ENCODE measurements at regions of chr19 and their contacts with region 1.

Region 1: GRCh38 chr19:16324384-16325160 is at the start of gene KLF2:
- DNase-seq: peak; percentile 91 to 98 (median 95)
- ATAC-seq: peak; percentile 58 to 67
- H3K4me3 Mint-ChIP-seq: peak within 1 kb of the TSS; percentile 56 to 100 (median 82)
- H3K27ac Mint-ChIP-seq: peak within 1 kb of the TSS; percentile 74 to 100 (median 98)
- H3K4me1 Mint-ChIP-seq: peaks cover 23 to 64% (median 56%) of the 10 kb centered on the region in 4 donors
- H3K27me3 Mint-ChIP-seq: peaks cover 0 to 11% (median 0%) of the 10 kb centered on the region in 5 donors
- polyA plus RNA-seq, gene KLF2: 115 to 216 (median 166) TPM

Region 2: GRCh38 chr19:16143399-16144245 is 180.9 kb before region 1 on chr19 and contains the start of gene HSH2D:
- POLR2A ChIA-PET with region 1: interaction called, 12 read pairs
- DNase-seq: peak; percentile 63 to 90 (median 76)
- ATAC-seq: peak; percentile 99 to 100
- H3K4me3 Mint-ChIP-seq: peak within 1 kb of the TSS; percentile 91 to 100 (median 96)
- H3K27ac Mint-ChIP-seq: peak within 1 kb of the TSS; percentile 93 to 100 (median 98)
- H3K4me1 Mint-ChIP-seq: peaks cover 17 to 81% (median 39%) of the 10 kb centered on the region in 4 donors
- H3K27me3 Mint-ChIP-seq: no peaks in the 10 kb centered on the region
- polyA plus RNA-seq, gene HSH2D: 6.5 to 9.8 (median 6.7) TPM

Region 3: DNA sequence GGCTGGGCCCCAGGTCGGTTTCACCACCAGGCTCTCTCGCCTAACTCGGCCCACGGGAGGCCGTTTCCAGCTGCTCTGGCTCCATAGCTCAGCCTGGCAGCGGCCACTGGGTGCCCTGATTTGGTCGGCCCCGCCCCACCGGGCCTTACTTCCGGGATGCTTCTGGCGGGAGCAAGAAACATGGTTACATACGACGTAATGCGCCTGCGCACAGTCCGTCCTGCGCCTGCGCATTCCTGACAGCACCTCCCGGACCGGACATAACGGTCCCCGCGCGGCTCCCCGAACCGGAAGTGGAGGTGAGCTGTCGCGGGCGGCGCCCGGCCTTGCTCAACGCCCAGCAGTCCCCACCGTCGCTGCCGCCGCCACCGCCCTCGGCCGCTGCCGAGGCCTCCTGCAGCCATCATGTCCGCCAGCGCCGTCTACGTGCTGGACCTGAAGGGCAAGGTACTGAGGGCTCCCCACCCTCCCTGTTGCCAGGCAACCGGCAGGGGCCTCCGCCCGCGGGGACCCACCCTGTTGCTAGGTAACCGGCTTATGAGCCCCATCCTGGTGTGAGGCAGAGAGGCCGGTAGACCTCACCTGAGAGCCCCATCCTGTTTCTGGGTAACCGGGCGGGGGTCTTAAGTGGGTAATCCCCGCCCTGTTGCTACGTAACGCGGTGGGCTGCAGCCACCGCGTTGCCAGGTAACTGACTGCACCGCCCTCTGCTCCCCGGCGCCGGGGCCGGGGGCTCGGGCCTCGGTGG is 126.8 kb before region 1 on chr19 and contains the start of gene AP1M1:
- POLR2A ChIA-PET with region 1: interaction called, 18 read pairs
- DNase-seq: peak; percentile 94 to 99 (median 97)
- ATAC-seq: peak; percentile 78 to 83
- H3K4me3 Mint-ChIP-seq: peak within 1 kb of the TSS; percentile 75 to 95 (median 90)
- H3K27ac Mint-ChIP-seq: peak within 1 kb of the TSS; percentile 94 to 99 (median 98)
- H3K4me1 Mint-ChIP-seq: peaks cover 32 to 59% (median 48%) of the 10 kb centered on the region in 4 donors
- H3K27me3 Mint-ChIP-seq: no peaks in the 10 kb centered on the region
- polyA plus RNA-seq, gene AP1M1: 195 to 288 (median 241) TPM

Region 4: DNA sequence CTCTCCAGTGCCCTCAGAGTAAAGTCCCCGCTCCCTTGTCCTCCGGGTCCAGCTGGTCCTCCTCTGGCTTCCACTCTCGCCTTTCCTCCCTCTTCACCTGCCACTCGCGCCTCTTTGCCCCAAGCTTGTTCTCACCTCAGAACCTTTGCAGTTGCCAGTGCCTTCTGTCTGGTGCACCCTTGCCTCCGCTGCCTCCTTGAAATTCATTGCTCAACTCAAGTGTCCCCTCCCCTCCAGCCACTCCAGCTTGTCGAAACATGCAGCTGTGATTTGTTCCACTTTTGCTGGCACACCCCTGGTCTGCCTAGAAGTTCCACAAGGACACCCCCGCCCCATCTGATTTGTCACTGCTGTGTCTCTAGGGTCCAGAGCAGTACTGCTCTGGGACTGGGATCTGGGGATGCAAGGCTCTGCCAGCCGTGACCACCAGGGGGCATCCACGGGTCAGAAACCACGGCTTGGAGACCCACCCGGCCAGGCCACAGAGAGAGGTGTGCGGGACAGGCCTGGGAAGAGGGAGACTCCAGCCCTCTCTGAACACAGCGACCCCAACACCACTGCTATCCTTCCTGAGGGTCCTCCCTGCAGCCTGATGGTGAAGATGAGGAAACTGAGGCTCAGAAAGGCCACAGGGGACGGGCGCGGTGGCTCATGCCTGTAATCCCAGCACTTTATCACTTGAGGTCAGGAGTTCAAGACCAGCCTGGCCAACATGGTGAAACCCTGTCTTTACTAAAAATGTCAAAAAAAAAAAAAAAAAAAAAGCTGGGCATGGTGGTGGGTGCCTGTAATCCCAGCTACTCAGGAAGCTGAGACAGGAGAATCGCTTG is 77.0 kb before region 1 on chr19:
- POLR2A ChIA-PET with region 1: interaction called, 284 read pairs
- DNase-seq: peak; percentile 66 to 89 (median 80)
- ATAC-seq: peak; percentile 71
- H3K4me3 Mint-ChIP-seq: peak overlapping the region; percentile 21 to 84 (median 61)
- H3K27ac Mint-ChIP-seq: peak overlapping the region; percentile 80 to 97 (median 92)
- H3K4me1 Mint-ChIP-seq: peaks cover 14 to 54% (median 39%) of the 10 kb centered on the region in 4 donors
- H3K27me3 Mint-ChIP-seq: no peaks in the 10 kb centered on the region

Region 5: DNA sequence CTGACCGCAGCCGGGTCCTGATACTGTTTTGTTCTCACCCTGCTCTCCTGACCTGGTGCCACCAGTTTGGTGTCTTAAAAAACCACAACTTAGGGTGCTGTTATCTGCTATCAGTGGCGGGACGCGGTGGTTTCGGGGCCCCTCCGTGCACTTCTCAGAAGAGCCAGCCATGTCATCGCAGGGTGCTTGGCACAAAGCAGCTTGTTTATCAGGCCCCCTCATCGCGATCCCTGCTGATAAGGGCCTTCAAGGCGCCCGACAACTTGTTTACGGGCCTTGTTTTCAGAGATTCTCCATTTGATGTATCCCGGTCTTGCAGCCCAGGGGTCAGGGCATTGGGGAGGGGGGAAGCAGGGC is 58.0 kb before region 1 on chr19:
- POLR2A ChIA-PET with region 1: interaction called, 56 read pairs
- DNase-seq: peak; percentile 37 to 78 (median 60)
- ATAC-seq: peak; percentile 72 to 76
- H3K4me3 Mint-ChIP-seq: peak overlapping the region; percentile 34 to 86 (median 68)
- H3K27ac Mint-ChIP-seq: peak overlapping the region; percentile 81 to 97 (median 88)
- H3K4me1 Mint-ChIP-seq: peaks cover 26 to 72% (median 60%) of the 10 kb centered on the region in 4 donors
- H3K27me3 Mint-ChIP-seq: no peaks in the 10 kb centered on the region

Region 6: GRCh38 chr19:16293118-16294091 is 31.2 kb before region 1 on chr19:
- POLR2A ChIA-PET with region 1: interaction called, 11 read pairs
- DNase-seq: no peak
- ATAC-seq: no peak
- H3K4me3 Mint-ChIP-seq: no peak overlapping the region
- H3K27ac Mint-ChIP-seq: no peak overlapping the region
- H3K4me1 Mint-ChIP-seq: peaks cover 4 to 8% (median 6%) of the 10 kb centered on the region in 4 donors
- H3K27me3 Mint-ChIP-seq: peaks cover 0 to 1% (median 0%) of the 10 kb centered on the region in 5 donors

Region 7: GRCh38 chr19:16382775-16383543 is 58.4 kb after region 1 on chr19:
- POLR2A ChIA-PET with region 1: interaction called, 4,622 read pairs
- DNase-seq: peak; percentile 66 to 88 (median 76)
- ATAC-seq: peak; percentile 78
- H3K4me3 Mint-ChIP-seq: peak overlapping the region; percentile 43 to 84 (median 72)
- H3K27ac Mint-ChIP-seq: peak overlapping the region in 8 of 10 donors; percentile 90 to 98 (median 98)
- H3K4me1 Mint-ChIP-seq: peaks cover 35 to 61% (median 53%) of the 10 kb centered on the region in 4 donors
- H3K27me3 Mint-ChIP-seq: no peaks in the 10 kb centered on the region

Measured in naive thymus-derived CD8-positive, alpha-beta T cell (primary cell).